GM23248 (cell line): ENCODE measurements at regions of chr10 and their contacts with region 1.

Region 1: DNA sequence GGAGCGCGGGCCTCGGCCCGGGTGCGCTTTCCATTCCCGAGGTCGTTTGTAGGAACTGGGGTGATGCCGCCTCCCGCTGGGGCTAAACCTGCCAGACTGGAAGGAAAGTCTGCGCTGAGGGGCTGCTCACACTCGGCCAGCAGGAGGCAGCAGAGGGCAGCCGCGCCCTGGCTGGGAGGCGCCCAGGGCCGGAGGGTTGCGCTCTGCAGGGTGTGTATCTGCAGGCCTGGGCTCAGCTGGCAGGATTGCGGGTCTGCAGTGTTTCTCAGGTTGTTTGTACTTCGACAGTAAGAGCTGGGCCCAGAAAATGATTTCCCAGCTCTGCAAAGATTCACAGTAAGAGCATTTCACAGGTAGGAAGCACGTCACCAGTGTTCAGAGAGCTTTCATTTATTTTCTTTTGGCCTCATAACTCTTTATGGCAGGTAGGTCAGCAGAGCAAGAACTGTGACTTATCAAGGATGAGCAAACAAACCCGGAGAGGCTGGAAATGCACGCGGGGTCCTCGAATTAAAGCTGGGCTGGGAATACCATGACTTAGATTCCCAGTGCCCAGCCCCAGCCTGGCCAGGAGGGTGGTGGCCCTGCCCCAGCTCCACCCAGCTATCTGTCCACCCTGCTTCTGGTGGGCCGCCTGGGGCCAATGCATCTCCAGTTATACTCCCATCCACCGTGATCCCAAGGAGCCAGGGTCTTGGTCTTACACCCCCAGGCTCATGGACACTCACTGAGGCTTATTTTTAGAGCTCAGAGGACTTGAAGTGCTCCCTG is 15.2 kb upstream of the PPP2R2D start:
- DNase-seq: peak; percentile 72
- H3K4me3 ChIP-seq: no peak overlapping the region
- H3K27ac ChIP-seq: no peak overlapping the region
- H3K4me1 ChIP-seq: no peaks in the 10 kb centered on the region
- H3K27me3 ChIP-seq: no peaks in the 10 kb centered on the region

Region 2: GRCh38 chr10:132023092-132023811 is 137.7 kb after region 1 on chr10:
- in situ Hi-C with region 1: loop called (anchors 5 kb)
- DNase-seq: peak; percentile 88
- H3K4me3 ChIP-seq: peak overlapping the region; percentile 76
- H3K27ac ChIP-seq: no peak overlapping the region
- H3K4me1 ChIP-seq: no peaks in the 10 kb centered on the region
- H3K27me3 ChIP-seq: no peaks in the 10 kb centered on the region; the same call in 1 of the 2 replicates